ENCODE measurements at regions of chr10 and their contacts with region 1.

Region 1: GRCh38 chr10:114068054-114068707 is 24.5 kb downstream of the ADRB1 start:
- DNase-seq: peak in 1 of 2 donors; percentile 19
- ATAC-seq: peak in 2 of 8 donors; percentile 33 to 44
- H3K4me3 ChIP-seq: no peak overlapping the region
- H3K27ac ChIP-seq: peak overlapping the region in 9 of 10 donors; percentile 48 to 87 (median 79)
- H3K4me1 ChIP-seq: peaks cover 4 to 57% (median 38%) of the 10 kb centered on the region in 9 donors
- H3K27me3 ChIP-seq: no peaks in the 10 kb centered on the region
- CTCF ChIP-seq: no peak

Region 2: DNA sequence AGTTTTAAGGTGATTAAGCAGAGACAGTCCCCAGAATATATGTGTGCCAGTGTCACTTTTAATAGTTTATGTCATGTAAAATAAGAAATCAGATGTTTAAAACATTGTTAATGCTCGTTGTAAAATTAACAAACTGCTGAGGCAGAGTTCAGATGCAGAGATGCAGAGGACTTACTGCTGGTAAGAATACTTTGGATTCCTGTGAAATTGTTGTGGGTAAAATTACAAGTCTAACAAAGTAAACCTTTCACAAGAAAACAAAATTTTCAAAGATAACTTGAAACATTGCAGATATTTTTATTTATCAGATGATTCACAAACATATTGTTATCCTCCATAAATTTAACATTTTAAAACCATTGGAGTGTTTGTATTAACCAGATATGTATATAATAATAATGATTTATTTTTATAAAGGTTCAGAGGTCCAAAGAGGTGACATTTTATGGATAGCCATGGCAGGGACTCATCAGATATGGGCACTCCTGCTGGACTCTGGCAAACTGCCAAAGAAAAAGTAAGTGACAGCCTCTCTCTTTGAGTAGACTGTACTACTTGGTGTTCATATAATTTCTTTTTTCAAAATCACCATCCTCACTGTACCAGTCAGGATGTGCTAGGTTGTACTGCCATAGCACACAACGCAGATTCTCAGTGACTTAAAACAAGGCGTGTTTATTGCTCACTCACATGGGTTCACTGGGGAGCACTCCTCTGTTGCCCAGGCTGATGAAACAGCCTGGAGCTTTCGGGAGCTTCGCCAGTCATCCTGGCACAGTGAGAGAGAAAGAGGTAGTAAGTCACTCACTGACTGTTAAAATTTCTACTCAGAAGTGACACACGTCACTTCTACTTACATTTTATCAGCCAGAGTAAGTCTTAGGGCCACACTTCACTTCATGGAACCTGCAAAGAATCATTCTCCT is 170.2 kb before region 1 on chr10:
- intact Hi-C with region 1: loop called in 1 of 10 experiments (anchors 10 kb)
- DNase-seq: peak; percentile 24 to 25
- ATAC-seq: peak in 7 of 8 donors; percentile 58 to 85 (median 77)
- H3K4me3 ChIP-seq: no peak overlapping the region
- H3K27ac ChIP-seq: peak overlapping the region in 6 of 10 donors; percentile 9 to 48 (median 18)
- H3K4me1 ChIP-seq: peaks cover 0 to 52% (median 20%) of the 10 kb centered on the region in 9 donors
- H3K27me3 ChIP-seq: no peaks in the 10 kb centered on the region
- CTCF ChIP-seq: no peak